ENCODE measurements at regions of chr19 and their contacts with region 1.

Region 1: GRCh38 chr19:29844891-29845572 is 33.2 kb downstream of the CCNE1 start:
- DNase-seq: peak; percentile 96
- H3K4me3 Mint-ChIP-seq: peak overlapping the region; percentile 83
- H3K27ac Mint-ChIP-seq: peak overlapping the region; percentile 79
- H3K4me1 Mint-ChIP-seq: peaks cover 10% of the 10 kb centered on the region
- H3K27me3 Mint-ChIP-seq: no peaks in the 10 kb centered on the region

Region 2: DNA sequence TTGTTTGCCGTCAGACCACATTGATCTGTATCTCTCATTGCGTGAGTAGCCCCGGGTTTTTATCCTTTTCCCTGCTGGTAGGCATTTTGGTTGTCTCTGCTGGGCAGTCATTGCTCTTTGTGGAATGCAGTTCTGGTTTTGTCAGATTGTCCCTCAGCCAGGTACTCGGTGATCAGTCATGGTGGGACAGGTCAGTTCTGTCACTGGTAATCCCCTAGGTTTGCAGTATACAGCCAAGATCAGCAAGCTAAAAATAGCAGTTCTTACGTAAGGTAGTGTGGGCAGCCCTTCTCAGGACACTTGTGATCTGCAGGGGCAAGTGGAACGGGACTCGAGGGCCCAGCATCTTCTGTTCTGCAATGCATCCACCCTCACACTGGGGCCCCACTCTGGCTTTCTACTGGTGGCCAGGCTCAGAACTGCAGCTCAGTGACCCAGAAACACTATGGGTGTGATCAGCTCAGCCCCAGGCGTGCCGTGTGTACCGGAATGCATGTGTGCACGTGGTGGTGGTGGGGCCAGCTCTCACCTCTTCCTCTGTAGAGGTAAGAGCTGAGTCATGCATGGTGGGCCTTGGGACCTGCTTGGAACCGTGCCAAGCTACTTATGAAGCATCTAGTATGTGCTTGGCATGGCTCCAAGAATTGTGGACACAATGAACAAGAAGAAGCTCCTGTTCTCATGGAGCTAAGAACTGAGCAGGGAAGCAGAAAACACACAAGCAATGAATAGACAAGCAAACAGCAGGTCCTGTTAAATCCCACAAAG is 173.5 kb before region 1 on chr19:
- CTCF ChIA-PET with region 1: no interaction called
- intact Hi-C with region 1: loop called (anchors 2 kb)
- DNase-seq: peak; percentile 96
- H3K4me3 Mint-ChIP-seq: peak overlapping the region; percentile 69
- H3K27ac Mint-ChIP-seq: peak overlapping the region; percentile 96
- H3K4me1 Mint-ChIP-seq: peaks cover 91% of the 10 kb centered on the region
- H3K27me3 Mint-ChIP-seq: no peaks in the 10 kb centered on the region

Region 3: GRCh38 chr19:29735800-29736199 is 109.2 kb before region 1 on chr19:
- CTCF ChIA-PET with region 1: no interaction called
- intact Hi-C with region 1: loop called (anchors 1 kb)
- DNase-seq: no peak
- H3K4me3 Mint-ChIP-seq: no peak overlapping the region
- H3K27ac Mint-ChIP-seq: no peak overlapping the region
- H3K4me1 Mint-ChIP-seq: no peaks in the 10 kb centered on the region
- H3K27me3 Mint-ChIP-seq: no peaks in the 10 kb centered on the region

Region 4: GRCh38 chr19:29761575-29762232 is 83.3 kb before region 1 on chr19:
- CTCF ChIA-PET with region 1: interaction called, 6 read pairs
- intact Hi-C with region 1: loop called (anchors 1 kb)
- DNase-seq: no peak
- H3K4me3 Mint-ChIP-seq: no peak overlapping the region
- H3K27ac Mint-ChIP-seq: no peak overlapping the region
- H3K4me1 Mint-ChIP-seq: peaks cover 3% of the 10 kb centered on the region
- H3K27me3 Mint-ChIP-seq: no peaks in the 10 kb centered on the region

Region 5: GRCh38 chr19:29811125-29812079 is 33.6 kb before region 1 on chr19 and contains the start of gene CCNE1:
- CTCF ChIA-PET with region 1: no interaction called
- intact Hi-C with region 1: loop called (anchors 1 kb)
- DNase-seq: peak; percentile 97
- H3K4me3 Mint-ChIP-seq: peak within 1 kb of the TSS; percentile 84
- H3K27ac Mint-ChIP-seq: peak within 1 kb of the TSS; percentile 88
- H3K4me1 Mint-ChIP-seq: peaks cover 11% of the 10 kb centered on the region
- H3K27me3 Mint-ChIP-seq: no peaks in the 10 kb centered on the region
- total RNA-seq, gene CCNE1: 31.2 to 34.1 TPM

Region 6: GRCh38 chr19:29831041-29831548 is 13.9 kb before region 1 on chr19:
- CTCF ChIA-PET with region 1: no interaction called
- intact Hi-C with region 1: loop called (anchors 1 kb)
- DNase-seq: peak; percentile 87
- H3K4me3 Mint-ChIP-seq: peak overlapping the region; percentile 62
- H3K27ac Mint-ChIP-seq: peak overlapping the region; percentile 88
- H3K4me1 Mint-ChIP-seq: peaks cover 52% of the 10 kb centered on the region
- H3K27me3 Mint-ChIP-seq: no peaks in the 10 kb centered on the region

Region 7: DNA sequence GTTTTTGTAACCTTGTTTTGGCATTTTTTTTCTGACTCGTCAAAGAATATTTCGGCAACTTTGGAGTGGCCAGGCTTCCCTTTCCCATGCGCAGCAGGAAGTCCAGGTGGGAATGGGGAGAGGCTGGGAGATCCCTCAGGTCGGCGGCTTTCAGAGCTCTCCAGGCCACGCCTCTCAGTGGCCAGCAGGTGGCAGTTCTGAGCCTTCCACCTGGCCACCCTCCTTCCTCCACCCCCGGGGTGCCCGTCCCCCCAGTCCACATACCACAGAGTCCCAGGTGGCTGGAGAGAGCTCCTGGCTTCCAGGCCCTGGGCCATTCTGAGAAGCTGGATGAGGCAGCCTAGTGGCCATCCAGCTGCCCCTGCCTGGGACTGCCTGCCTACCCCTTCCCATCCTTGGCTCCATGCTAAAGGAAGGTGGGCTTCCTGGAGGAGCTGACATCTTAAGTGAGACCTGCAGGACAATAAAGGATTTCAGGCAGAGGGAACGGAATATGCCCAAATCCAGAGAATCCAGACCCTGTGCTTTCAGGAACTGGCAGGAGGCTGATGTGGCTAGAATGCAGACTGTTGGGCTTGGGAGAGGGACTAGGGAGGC is 13.1 kb after region 1 on chr19:
- CTCF ChIA-PET with region 1: interaction called, 13 read pairs
- intact Hi-C with region 1: no loop called
- DNase-seq: peak; percentile 58
- H3K4me3 Mint-ChIP-seq: no peak overlapping the region
- H3K27ac Mint-ChIP-seq: no peak overlapping the region
- H3K4me1 Mint-ChIP-seq: peaks cover 3% of the 10 kb centered on the region
- H3K27me3 Mint-ChIP-seq: no peaks in the 10 kb centered on the region